Activated CD4-positive, alpha-beta memory T cell treated with anti-CD3 and anti-CD28 coated beads for 36 hours (primary cell): ENCODE measurements at regions of chr5 and their contacts with region 1.

Region 1: GRCh38 chr5:132490486-132491367 is at the start of gene IRF1:
- DNase-seq: peak; percentile 99
- H3K4me3 Mint-ChIP-seq: peak within 1 kb of the TSS; percentile 93
- H3K27ac Mint-ChIP-seq: peak within 1 kb of the TSS; percentile 99
- H3K4me1 Mint-ChIP-seq: peaks cover 66% of the 10 kb centered on the region
- H3K27me3 Mint-ChIP-seq: no peaks in the 10 kb centered on the region
- total RNA-seq, gene IRF1: 104 to 106 TPM

Region 2: GRCh38 chr5:132386644-132387286 is 104.0 kb before region 1 on chr5:
- CTCF ChIA-PET with region 1: interaction called, 461 read pairs
- POLR2A ChIA-PET with region 1: interaction called, 11 read pairs
- intact Hi-C with region 1: no loop called
- DNase-seq: peak; percentile 87
- H3K4me3 Mint-ChIP-seq: no peak overlapping the region
- H3K27ac Mint-ChIP-seq: peak overlapping the region; percentile 14
- H3K4me1 Mint-ChIP-seq: peaks cover 42% of the 10 kb centered on the region
- H3K27me3 Mint-ChIP-seq: no peaks in the 10 kb centered on the region

Region 3: GRCh38 chr5:132419502-132420468 is 70.9 kb before region 1 on chr5:
- CTCF ChIA-PET with region 1: interaction called, 26 read pairs
- POLR2A ChIA-PET with region 1: interaction called, 361 read pairs
- intact Hi-C with region 1: loop called (anchors 1 kb)
- DNase-seq: peak; percentile 78
- H3K4me3 Mint-ChIP-seq: peak overlapping the region; percentile 15
- H3K27ac Mint-ChIP-seq: peak overlapping the region; percentile 83
- H3K4me1 Mint-ChIP-seq: peaks cover 89% of the 10 kb centered on the region
- H3K27me3 Mint-ChIP-seq: no peaks in the 10 kb centered on the region

Region 4: DNA sequence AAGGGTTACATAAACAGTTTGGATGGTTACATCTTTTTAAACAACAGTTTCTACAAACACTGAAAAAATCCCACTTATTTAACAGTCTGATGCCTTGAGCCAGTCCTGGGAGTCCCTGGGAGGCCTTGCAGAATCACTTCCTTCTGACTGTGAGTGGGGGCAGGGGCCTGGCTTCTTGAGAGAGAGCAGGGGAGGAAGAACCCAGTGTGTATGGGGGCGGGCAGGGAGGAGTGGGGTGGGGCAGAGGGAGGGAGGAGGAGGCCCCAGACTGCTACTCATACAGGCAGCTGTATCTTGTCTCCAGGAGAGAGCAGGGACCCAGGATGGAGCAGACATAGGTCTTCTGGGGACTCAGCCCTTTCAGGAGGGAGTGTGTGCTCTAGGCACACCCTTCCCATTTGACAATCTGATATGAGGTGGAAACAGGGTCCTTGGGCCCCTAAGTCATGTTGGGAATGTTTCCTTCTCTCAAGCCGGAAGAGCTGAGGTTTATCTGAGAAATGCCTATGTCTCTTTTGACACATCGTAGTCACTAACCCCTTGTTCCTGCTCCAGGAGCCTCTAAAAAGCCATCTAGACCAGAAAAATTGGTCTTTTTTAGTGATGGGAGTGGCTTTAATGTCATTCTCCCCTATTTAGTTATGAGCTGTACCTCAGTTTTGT is 53.0 kb before region 1 on chr5:
- CTCF ChIA-PET with region 1: interaction called, 3 read pairs
- POLR2A ChIA-PET with region 1: interaction called, 361 read pairs
- intact Hi-C with region 1: no loop called
- DNase-seq: peak; percentile 83
- H3K4me3 Mint-ChIP-seq: peak overlapping the region; percentile 18
- H3K27ac Mint-ChIP-seq: peak overlapping the region; percentile 78
- H3K4me1 Mint-ChIP-seq: peaks cover 78% of the 10 kb centered on the region
- H3K27me3 Mint-ChIP-seq: no peaks in the 10 kb centered on the region

Region 5: DNA sequence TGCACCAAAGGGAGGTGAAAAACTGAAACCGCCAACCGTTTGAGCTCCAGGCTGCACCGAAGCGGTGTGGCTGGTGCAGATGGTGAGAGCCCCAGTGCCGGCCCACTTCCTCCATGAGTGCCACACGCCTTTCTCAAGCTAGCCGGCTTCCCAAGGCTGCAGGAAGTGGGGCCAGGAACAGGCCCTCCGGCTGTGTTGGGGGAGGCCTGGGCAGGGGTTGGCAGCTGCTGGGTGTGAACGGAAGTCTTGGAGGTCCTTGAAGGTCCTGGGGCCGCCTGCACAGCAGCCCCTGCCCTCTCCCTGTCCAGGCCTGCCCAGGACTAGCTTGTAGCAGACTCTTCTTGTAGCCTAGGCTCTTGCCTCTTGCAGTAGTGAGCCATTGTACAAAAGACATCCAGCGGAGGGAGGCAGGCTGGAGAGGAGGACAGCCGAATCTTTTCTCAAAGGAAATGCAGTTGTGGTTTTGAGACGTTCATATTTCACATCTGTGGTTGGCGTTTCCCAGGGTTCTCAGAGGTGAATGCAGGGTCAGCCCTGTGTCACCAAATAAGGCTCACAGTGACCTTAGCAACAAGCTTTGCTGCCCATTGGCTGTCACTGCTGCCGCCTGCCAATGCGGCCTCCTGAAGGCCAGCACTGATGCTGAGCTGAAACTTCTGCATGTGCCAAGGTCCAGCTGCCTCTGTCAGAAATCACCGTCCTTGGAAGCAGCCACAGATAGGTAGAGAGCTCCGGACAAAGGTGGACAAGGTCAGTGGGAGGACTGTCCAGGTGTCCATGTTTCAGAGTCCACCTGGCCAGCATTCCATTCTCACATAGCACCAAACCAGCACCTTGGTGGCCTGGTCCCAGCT is 24.1 kb before region 1 on chr5:
- CTCF ChIA-PET with region 1: interaction called, 10 read pairs
- POLR2A ChIA-PET with region 1: interaction called, 252 read pairs
- intact Hi-C with region 1: loop called (anchors 1 kb)
- DNase-seq: peak; percentile 85
- H3K4me3 Mint-ChIP-seq: peak overlapping the region; percentile 68
- H3K27ac Mint-ChIP-seq: peak overlapping the region; percentile 75
- H3K4me1 Mint-ChIP-seq: peaks cover 86% of the 10 kb centered on the region
- H3K27me3 Mint-ChIP-seq: no peaks in the 10 kb centered on the region

Region 6: GRCh38 chr5:132479111-132479951 is 11.4 kb before region 1 on chr5:
- CTCF ChIA-PET with region 1: interaction called, 27 read pairs
- POLR2A ChIA-PET with region 1: interaction called, 252 read pairs
- intact Hi-C with region 1: no loop called
- DNase-seq: no peak
- H3K4me3 Mint-ChIP-seq: peak overlapping the region; percentile 28
- H3K27ac Mint-ChIP-seq: peak overlapping the region; percentile 87
- H3K4me1 Mint-ChIP-seq: peaks cover 68% of the 10 kb centered on the region
- H3K27me3 Mint-ChIP-seq: no peaks in the 10 kb centered on the region

Region 7: GRCh38 chr5:133579766-133580165 is 1089.0 kb after region 1 on chr5:
- CTCF ChIA-PET with region 1: no interaction called
- POLR2A ChIA-PET with region 1: no interaction called
- intact Hi-C with region 1: no loop called
- DNase-seq: no peak
- H3K4me3 Mint-ChIP-seq: no peak overlapping the region
- H3K27ac Mint-ChIP-seq: no peak overlapping the region
- H3K4me1 Mint-ChIP-seq: no peaks in the 10 kb centered on the region
- H3K27me3 Mint-ChIP-seq: peaks cover 23% of the 10 kb centered on the region